B cell (primary cell): ENCODE measurements at regions of chr19 and their contacts with region 1.

Region 1: GRCh38 chr19:41951686-41952172 is 7.4 kb downstream of the RABAC1 start:
- DNase-seq: peak; percentile 88
- ATAC-seq: peak; percentile 94
- H3K4me3 ChIP-seq: no peak overlapping the region
- H3K4me3 Mint-ChIP-seq: no peak overlapping the region
- H3K27ac ChIP-seq: no peak overlapping the region
- H3K27ac Mint-ChIP-seq: peak overlapping the region; percentile 74
- H3K4me1 ChIP-seq: peaks cover 14 to 23% of the 10 kb centered on the region in 2 donors
- H3K4me1 Mint-ChIP-seq: peaks cover 33% of the 10 kb centered on the region
- H3K27me3 ChIP-seq: no peaks in the 10 kb centered on the region
- H3K27me3 Mint-ChIP-seq: no peaks in the 10 kb centered on the region
- CTCF ChIP-seq: peak; percentile 99

Region 2: DNA sequence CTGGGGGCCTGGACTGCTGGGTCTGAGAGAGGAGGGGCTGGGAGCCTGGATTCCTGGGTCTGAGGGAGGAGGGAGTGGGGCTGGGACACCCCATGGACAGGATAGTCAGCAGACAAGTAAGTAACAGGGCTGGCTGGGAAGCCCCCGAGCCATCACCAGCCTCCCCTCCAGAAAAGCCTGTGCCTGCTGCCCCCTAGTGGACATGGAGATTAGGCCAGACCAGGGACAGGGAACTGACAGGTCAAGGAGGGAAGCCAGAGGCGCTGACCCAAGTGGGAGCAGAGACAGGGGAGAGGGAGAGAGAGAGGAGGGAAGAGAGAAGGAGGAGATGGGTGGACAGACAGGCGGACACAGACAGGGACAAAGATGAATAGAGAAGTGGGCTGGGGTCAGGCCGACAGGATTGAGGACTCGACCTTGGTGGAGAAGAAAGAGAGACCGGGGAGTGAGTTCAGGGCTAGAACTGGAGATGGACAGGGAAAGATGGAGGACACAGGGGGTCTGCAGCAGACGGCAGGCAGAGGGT is 16.8 kb before region 1 on chr19:
- CTCF ChIA-PET with region 1: interaction called, 23 read pairs
- POLR2A ChIA-PET with region 1: interaction called, 14 read pairs
- intact Hi-C with region 1: loop called (anchors 1 kb)
- DNase-seq: peak; percentile 88
- ATAC-seq: peak; percentile 84
- H3K4me3 ChIP-seq: no peak overlapping the region
- H3K4me3 Mint-ChIP-seq: peak overlapping the region; percentile 33
- H3K27ac ChIP-seq: peak overlapping the region in 1 of 2 donors; percentile 55
- H3K27ac Mint-ChIP-seq: peak overlapping the region; percentile 86
- H3K4me1 ChIP-seq: peaks cover 42 to 69% of the 10 kb centered on the region in 2 donors
- H3K4me1 Mint-ChIP-seq: peaks cover 53% of the 10 kb centered on the region
- H3K27me3 ChIP-seq: peaks cover 0 to 10% (median 0%) of the 10 kb centered on the region in 4 experiments
- H3K27me3 Mint-ChIP-seq: no peaks in the 10 kb centered on the region
- CTCF ChIP-seq: peak; percentile 89

Region 3: DNA sequence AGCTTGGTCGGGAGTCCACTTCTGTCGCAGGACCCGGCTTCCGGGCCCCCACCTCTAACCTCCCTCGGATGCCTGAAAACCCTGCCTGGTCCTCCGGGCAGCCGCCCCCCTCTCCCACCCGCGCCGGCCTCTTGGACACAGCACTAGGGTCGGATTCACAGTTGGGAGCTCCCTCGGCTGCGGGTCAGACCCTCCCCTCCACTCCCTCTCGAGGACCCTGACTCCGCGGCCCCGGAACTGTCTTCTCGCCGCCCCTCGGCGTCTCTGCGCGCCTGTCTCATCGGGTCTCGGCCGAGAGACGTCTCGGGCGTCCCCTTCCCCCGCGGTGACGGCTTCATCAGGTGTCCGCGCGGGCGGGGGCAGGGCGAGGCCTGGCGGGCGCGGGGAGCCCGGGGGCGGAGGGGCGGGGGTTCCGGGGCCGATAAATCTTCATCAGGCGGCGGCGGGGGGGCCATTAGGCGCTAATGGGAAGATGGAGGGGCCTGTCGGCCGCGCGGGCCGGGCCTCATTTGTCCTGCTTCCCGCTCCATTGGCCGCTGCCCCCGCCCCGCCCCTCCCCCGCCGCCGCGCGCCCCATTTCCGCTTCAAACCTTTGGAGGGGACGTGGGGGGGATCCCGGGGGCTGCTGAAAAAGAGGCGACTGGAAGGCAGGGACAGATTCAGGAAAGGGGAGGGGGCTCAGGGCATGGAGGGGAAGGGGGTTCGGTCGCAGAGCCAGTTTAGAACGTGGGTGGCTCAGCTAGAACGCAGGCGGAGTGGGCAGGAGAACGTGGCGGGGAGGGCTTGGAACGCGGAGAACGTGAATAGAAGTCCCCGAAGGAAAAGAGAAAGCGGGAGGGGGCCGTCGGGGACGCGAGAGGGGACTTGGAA is 11.6 kb before region 1 on chr19:
- CTCF ChIA-PET with region 1: interaction called, 39 read pairs
- POLR2A ChIA-PET with region 1: interaction called, 14 read pairs
- intact Hi-C with region 1: loop called (anchors 1 kb)
- DNase-seq: peak; percentile 74
- ATAC-seq: peak; percentile 39
- H3K4me3 ChIP-seq: peak overlapping the region in 4 of 5 experiments; percentile 52 to 88 (median 70)
- H3K4me3 Mint-ChIP-seq: peak overlapping the region; percentile 92
- H3K27ac ChIP-seq: peak overlapping the region; percentile 86 to 91
- H3K27ac Mint-ChIP-seq: peak overlapping the region; percentile 95
- H3K4me1 ChIP-seq: peaks cover 47 to 73% of the 10 kb centered on the region in 2 donors
- H3K4me1 Mint-ChIP-seq: peaks cover 57% of the 10 kb centered on the region
- H3K27me3 ChIP-seq: no peaks in the 10 kb centered on the region
- H3K27me3 Mint-ChIP-seq: no peaks in the 10 kb centered on the region
- CTCF ChIP-seq: no peak